Pancreas (tissue), 10 donors: ENCODE measurements at regions of chr17 and their contacts with region 1.

Region 1: DNA sequence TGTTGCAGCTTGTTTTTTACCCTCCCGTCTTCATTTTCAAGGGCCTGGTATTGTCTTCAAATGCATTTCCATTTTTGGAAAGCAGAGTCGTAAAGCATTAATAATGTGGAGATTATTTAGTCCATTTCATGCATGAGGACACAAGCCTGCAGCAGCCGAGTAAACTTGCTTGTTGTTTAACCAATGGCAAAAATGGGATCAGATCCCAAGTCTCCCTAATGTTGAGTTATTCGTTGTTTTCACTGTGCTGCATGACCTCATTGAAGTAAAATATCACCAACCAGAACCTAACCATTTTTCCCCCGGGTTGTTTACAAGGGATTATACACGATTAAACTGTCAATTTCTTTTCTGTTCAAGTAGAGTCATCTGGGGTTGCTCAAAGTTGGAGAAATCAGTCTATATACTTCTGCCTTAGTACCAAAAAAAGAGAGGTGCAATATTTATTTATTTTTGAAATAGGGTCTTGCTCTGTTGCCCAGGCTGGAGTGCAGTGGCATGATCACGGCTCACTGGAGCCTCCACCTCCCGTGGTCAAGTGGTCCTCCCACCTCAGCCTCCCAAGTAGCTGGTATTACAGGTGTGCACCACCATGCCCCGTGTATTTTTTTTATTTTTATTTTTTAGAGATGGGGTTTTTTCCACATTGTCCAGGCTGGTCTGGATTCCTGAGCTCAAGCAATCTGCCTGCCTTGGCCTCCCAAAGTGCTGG is 12.4 kb downstream of the AMZ2 start:
- DNase-seq: no peak
- ATAC-seq: no peak
- H3K4me3 ChIP-seq: no peak overlapping the region
- H3K27ac ChIP-seq: no peak overlapping the region
- H3K4me1 ChIP-seq: peaks cover 0 to 3% (median 0%) of the 10 kb centered on the region in 3 donors
- H3K27me3 ChIP-seq: no peaks in the 10 kb centered on the region
- CTCF ChIP-seq: no peak

Region 2: DNA sequence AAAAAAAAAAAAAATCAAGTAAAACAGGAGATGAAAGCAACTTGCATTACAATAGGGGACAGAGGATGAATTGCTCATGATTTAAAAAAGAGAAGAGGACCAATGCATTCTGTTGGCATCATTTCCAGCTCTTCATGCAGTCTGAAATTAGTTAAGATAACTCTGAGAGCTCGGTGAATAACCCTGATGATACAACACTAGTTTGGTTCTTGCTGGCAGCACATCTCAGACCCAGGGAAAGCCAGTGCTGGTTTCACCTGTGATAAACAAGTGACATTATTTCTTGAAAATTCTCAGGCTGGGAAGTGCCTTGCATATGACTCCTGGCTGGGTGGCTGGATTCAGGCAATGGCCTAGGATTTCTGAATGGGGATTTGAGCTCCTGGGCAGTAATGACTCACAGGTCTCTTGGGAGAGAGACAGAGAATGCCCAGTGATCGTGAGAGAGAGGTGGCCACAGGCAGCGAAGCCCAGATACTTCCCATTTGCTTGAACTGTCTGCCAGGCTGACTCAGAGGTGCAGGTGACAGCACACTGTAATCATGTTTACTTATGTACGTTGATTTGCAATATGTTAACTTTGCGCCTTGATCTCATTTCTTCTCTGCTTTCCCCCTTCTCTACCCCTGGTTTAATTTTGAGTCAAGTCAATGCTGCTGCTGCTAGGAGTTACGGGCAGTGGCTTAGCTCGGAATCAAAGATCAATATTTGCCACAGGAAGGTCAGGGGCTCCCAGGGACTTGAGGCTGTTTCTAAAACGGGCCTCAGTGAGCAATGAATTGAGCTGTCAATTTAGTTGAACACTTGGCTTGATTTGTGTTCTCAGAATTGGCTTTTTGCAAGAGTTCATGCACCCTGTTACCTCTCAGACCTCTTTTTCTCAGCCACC is 58.1 kb after region 1 on chr17:
- intact Hi-C with region 1: no loop called
- DNase-seq: peak in 3 of 6 donors; percentile 39 to 66 (median 42)
- ATAC-seq: peak; percentile 83 to 91 (median 88)
- H3K4me3 ChIP-seq: no peak overlapping the region
- H3K27ac ChIP-seq: peak overlapping the region in 2 of 4 donors; percentile 20 to 53
- H3K4me1 ChIP-seq: peaks cover 0 to 9% (median 0%) of the 10 kb centered on the region in 3 donors
- H3K27me3 ChIP-seq: no peaks in the 10 kb centered on the region
- CTCF ChIP-seq: no peak

Region 3: DNA sequence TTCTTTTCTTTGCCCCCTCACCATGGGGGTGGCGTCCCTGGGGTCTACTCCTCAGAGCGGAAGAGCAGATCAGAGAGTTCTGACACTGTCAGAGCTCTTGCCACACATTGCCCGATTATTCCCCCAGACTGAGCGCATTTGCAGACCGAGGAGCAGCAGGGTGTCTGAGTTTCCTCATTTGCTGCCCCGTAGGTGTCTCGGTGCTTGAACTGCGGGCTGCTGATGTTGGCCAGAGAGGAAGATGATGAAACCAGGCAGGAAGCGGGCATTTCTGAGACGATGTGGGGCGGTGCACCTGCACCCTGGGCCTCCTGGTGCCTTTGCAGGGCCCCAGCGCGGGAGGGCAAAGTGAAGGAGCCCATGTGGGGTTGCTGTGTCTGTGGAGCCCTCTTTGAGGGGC is 86.2 kb after region 1 on chr17:
- intact Hi-C with region 1: no loop called
- DNase-seq: no peak
- ATAC-seq: peak in 3 of 4 donors; percentile 26 to 50 (median 30)
- H3K4me3 ChIP-seq: no peak overlapping the region
- H3K27ac ChIP-seq: no peak overlapping the region
- H3K4me1 ChIP-seq: no peaks in the 10 kb centered on the region
- H3K27me3 ChIP-seq: no peaks in the 10 kb centered on the region
- CTCF ChIP-seq: no peak

Region 4: GRCh38 chr17:68398691-68399637 is 138.8 kb after region 1 on chr17:
- intact Hi-C with region 1: loop called in 1 of 3 experiments (anchors 5 kb)
- DNase-seq: peak in 5 of 6 donors; percentile 36 to 67 (median 53)
- ATAC-seq: peak; percentile 84 to 95 (median 93)
- H3K4me3 ChIP-seq: no peak overlapping the region
- H3K27ac ChIP-seq: no peak overlapping the region
- H3K4me1 ChIP-seq: no peaks in the 10 kb centered on the region
- H3K27me3 ChIP-seq: no peaks in the 10 kb centered on the region
- CTCF ChIP-seq: peak; percentile 22 to 71 (median 63)

Region 5: DNA sequence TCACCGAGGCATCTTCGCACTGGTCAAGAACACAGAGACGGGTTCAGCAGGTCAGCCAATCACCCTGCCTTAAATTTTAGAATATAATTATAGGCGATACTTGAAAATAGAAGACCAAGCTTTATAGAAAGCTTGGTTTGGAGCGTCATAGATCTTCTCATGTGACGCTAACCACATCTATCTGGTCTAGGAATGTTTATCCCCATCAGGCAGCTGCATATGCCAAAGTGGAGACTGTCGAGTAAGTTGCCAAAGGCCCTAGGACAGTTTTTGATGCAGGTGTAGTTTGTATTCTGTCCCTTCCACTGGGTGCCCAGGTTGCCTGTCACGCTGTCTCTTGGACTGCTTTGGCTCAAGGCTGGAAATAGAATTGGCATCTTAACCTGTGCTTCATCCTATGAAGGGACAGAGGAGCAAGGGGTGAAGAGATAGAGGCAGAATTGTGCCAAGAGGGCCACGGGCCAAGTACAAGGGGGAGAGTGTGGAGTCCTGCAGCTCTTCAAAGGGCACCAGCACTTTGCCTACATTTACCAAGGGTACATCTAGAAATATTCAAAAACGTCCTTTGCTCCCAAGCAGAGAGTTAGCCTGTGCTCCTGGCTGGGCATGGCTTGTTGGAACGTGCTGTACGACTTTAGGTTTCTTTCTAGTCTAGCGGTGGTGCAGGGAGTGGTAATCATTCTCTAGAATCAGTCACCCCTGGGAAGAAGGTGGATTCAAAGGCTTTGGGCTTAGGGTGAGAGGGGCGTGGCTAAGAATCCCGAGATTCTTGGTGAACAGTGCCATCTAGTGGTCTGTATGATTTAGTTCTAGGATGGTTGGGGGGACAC is 202.4 kb after region 1 on chr17:
- intact Hi-C with region 1: loop called in 1 of 3 experiments (anchors 10 kb)
- DNase-seq: peak in 4 of 6 donors; percentile 52 to 74 (median 68)
- ATAC-seq: peak; percentile 76 to 90 (median 88)
- H3K4me3 ChIP-seq: no peak overlapping the region
- H3K27ac ChIP-seq: no peak overlapping the region
- H3K4me1 ChIP-seq: peaks cover 0 to 25% (median 0%) of the 10 kb centered on the region in 3 donors
- H3K27me3 ChIP-seq: no peaks in the 10 kb centered on the region
- CTCF ChIP-seq: peak; percentile 41 to 73 (median 68)